ENCODE measurements at regions of chr22 and their contacts with region 1.

Region 1: DNA sequence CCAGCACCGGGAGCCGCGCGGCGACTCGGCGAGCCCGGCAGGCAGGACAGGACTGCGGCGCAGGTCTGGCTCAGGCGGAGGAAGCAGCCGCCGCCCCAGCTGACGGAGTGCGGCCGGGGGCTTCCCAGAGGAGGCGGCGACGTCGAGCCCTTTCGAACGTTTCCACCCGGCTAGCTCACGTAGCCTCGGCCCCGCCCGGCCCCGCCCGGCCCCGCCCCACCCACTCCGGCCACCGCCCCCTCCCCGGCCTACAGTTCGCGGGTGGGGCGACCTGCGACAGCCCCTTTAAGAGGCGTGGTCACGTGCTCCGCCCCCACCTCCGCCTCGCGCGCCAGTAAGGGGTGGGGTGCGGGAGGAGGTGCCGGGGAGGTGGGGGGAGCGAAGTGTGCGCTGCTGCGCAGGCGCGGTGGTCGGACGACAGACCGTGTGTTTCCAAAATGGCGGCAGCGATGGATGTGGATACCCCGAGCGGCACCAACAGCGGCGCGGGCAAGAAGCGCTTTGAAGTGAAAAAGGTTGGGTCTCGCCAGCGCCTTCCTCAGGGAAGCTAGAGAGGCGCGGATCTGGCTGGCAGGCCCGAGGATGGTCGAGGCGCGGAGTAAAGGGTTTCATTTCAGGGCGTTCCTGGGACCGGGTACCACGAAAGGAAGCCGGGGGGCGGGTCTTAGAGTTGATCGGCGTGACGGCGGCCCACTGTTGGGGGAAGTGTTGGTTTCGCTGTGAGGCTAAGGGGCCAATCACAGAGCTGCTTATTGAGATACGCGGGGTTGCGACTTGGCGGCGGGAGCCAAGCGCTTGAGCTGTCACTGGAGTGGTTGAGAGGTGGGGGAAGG is at the start of gene RBX1:
- DNase-seq: peak; percentile 96
- H3K4me3 ChIP-seq: peak within 1 kb of the TSS; percentile 91
- H3K27ac ChIP-seq: peak within 1 kb of the TSS; percentile 84
- H3K27me3 ChIP-seq: no peaks in the 10 kb centered on the region
- CTCF ChIP-seq: no peak
- polyA plus RNA-seq, gene RBX1: 71.7 and 104 TPM in 2 replicates

Region 2: GRCh38 chr22:40805239-40805638 is 145.9 kb before region 1 on chr22:
- CTCF ChIA-PET with region 1: no interaction called
- POLR2A ChIA-PET with region 1: no interaction called
- DNase-seq: no peak
- H3K4me3 ChIP-seq: no peak overlapping the region
- H3K27ac ChIP-seq: no peak overlapping the region
- H3K27me3 ChIP-seq: no peaks in the 10 kb centered on the region
- CTCF ChIP-seq: no peak

Region 3: GRCh38 chr22:41022470-41023298 is 71.5 kb after region 1 on chr22:
- CTCF ChIA-PET with region 1: no interaction called
- POLR2A ChIA-PET with region 1: interaction called, 19 read pairs
- DNase-seq: peak; percentile 56
- H3K4me3 ChIP-seq: peak overlapping the region; percentile 65
- H3K27ac ChIP-seq: peak overlapping the region; percentile 65
- H3K27me3 ChIP-seq: no peaks in the 10 kb centered on the region
- CTCF ChIP-seq: no peak

Region 4: GRCh38 chr22:41091132-41092022 is 140.2 kb after region 1 on chr22:
- CTCF ChIA-PET with region 1: no interaction called
- POLR2A ChIA-PET with region 1: interaction called, 32 read pairs
- DNase-seq: peak; percentile 98
- H3K4me3 ChIP-seq: peak overlapping the region; percentile 85
- H3K27ac ChIP-seq: peak overlapping the region; percentile 99
- H3K27me3 ChIP-seq: no peaks in the 10 kb centered on the region
- CTCF ChIP-seq: no peak